Heart left ventricle (tissue), 16 donors: ENCODE measurements at regions of chr1 and their contacts with region 1.

Region 1: DNA sequence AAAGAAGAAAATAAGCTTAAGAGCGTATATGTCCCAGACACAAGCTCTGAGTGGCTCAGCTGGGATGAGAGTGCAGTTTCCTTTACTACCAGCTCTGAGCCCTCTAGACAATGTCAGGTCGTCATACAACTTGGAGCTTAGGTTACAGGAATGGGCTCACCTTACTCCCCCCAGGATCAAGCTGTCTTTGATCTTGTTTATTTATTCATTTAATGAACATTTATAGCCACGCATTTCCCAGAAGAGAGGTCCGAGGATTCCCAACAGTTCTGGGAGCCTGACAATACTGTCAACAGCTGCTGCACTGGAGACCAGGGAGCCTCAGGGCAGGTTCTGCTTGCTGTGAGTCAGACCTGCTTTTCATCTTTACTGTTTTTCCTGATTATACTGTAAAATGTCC is 378.9 kb downstream of the PLPP3 start:
- DNase-seq: no peak
- ATAC-seq: peak in 1 of 4 donors; percentile 48
- H3K4me3 ChIP-seq: no peak overlapping the region
- H3K27ac ChIP-seq: no peak overlapping the region
- H3K4me1 ChIP-seq: peaks cover 0 to 27% (median 15%) of the 10 kb centered on the region in 12 donors
- H3K27me3 ChIP-seq: no peaks in the 10 kb centered on the region
- CTCF ChIP-seq: no peak
- POLR2A ChIP-seq: no peak

Region 2: GRCh38 chr1:56284928-56285327 is 84.5 kb after region 1 on chr1:
- intact Hi-C with region 1: loop called in 4 of 10 experiments (anchors 5 to 10 kb)
- DNase-seq: peak in 3 of 5 donors; percentile 22 to 27 (median 24)
- ATAC-seq: peak in 3 of 4 donors; percentile 33 to 74 (median 56)
- H3K4me3 ChIP-seq: no peak overlapping the region
- H3K27ac ChIP-seq: peak overlapping the region in 7 of 12 donors; percentile 6 to 62 (median 36)
- H3K4me1 ChIP-seq: peaks cover 0 to 31% (median 12%) of the 10 kb centered on the region in 12 donors
- H3K27me3 ChIP-seq: no peaks in the 10 kb centered on the region
- CTCF ChIP-seq: no peak
- POLR2A ChIP-seq: no peak

Region 3: GRCh38 chr1:56547953-56548352 is 347.5 kb after region 1 on chr1:
- intact Hi-C with region 1: no loop called
- DNase-seq: peak in 3 of 5 donors; percentile 40 to 83 (median 82)
- ATAC-seq: peak; percentile 54 to 69 (median 64)
- H3K4me3 ChIP-seq: no peak overlapping the region
- H3K27ac ChIP-seq: peak overlapping the region; percentile 33 to 78 (median 66)
- H3K4me1 ChIP-seq: peaks cover 33 to 99% (median 88%) of the 10 kb centered on the region in 12 donors
- H3K27me3 ChIP-seq: no peaks in the 10 kb centered on the region
- CTCF ChIP-seq: no peak
- POLR2A ChIP-seq: no peak